ENCODE measurements at regions of chr12 and their contacts with region 1.

Region 1: GRCh38 chr12:12562585-12563261 is at the start of gene DUSP16:
- DNase-seq: peak; percentile 84 to 97
- H3K4me3 ChIP-seq: peak within 1 kb of the TSS; percentile 96 to 97
- H3K27ac ChIP-seq: peak within 1 kb of the TSS; percentile 100
- H3K4me1 ChIP-seq: peaks cover 0 to 15% of the 10 kb centered on the region in 2 donors
- H3K27me3 ChIP-seq: no peaks in the 10 kb centered on the region
- CTCF ChIP-seq: no peak
- total RNA-seq, gene DUSP16: 54.8 TPM

Region 2: GRCh38 chr12:12376646-12377448 is 185.9 kb before region 1 on chr12:
- intact Hi-C with region 1: loop called (anchors 2 kb)
- DNase-seq: no peak
- H3K4me3 ChIP-seq: no peak overlapping the region
- H3K27ac ChIP-seq: no peak overlapping the region
- H3K4me1 ChIP-seq: peaks cover 0 to 4% of the 10 kb centered on the region in 2 donors
- H3K27me3 ChIP-seq: no peaks in the 10 kb centered on the region
- CTCF ChIP-seq: peak; percentile 60 to 72 (median 66)

Region 3: DNA sequence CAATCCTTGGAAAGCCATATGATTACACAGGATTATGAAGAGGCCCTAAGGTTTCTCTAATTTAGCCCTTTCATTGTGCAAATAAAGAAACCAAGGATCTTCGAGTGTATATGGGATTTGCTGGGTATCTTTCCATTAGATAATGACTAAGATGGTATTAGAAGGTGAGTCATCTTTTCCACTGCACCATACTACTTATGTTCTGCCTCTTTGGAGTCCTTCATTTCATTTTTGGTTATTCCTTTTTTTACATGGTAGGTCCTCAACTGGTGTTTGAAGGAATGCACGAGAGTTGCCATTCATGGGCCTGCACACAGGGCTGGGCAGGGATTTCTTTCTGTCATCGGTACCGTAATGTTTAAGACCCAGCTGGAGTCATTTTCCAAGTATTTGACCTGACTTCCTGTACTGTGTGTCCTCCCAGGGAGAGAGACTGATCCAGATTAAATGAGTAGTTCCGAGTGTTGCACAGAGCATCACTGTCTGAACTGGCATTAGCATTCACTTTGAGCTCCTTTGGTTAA is 120.1 kb before region 1 on chr12:
- intact Hi-C with region 1: loop called (anchors 2 kb)
- DNase-seq: peak in 1 of 2 donors; percentile 73
- H3K4me3 ChIP-seq: peak overlapping the region in 1 of 2 donors; percentile 30
- H3K27ac ChIP-seq: peak overlapping the region; percentile 80 to 87
- H3K4me1 ChIP-seq: peaks cover 0 to 36% of the 10 kb centered on the region in 2 donors
- H3K27me3 ChIP-seq: no peaks in the 10 kb centered on the region
- CTCF ChIP-seq: no peak

Region 4: GRCh38 chr12:12611512-12612306 is 49.0 kb after region 1 on chr12 and contains the start of gene CREBL2:
- intact Hi-C with region 1: loop called (anchors 1 kb)
- DNase-seq: peak; percentile 83 to 97
- H3K4me3 ChIP-seq: peak within 1 kb of the TSS; percentile 76 to 83
- H3K27ac ChIP-seq: peak within 1 kb of the TSS; percentile 91 to 94
- H3K4me1 ChIP-seq: peaks cover 3 to 16% of the 10 kb centered on the region in 2 donors
- H3K27me3 ChIP-seq: no peaks in the 10 kb centered on the region
- CTCF ChIP-seq: no peak
- total RNA-seq, gene CREBL2: 19.4 TPM

Region 5: DNA sequence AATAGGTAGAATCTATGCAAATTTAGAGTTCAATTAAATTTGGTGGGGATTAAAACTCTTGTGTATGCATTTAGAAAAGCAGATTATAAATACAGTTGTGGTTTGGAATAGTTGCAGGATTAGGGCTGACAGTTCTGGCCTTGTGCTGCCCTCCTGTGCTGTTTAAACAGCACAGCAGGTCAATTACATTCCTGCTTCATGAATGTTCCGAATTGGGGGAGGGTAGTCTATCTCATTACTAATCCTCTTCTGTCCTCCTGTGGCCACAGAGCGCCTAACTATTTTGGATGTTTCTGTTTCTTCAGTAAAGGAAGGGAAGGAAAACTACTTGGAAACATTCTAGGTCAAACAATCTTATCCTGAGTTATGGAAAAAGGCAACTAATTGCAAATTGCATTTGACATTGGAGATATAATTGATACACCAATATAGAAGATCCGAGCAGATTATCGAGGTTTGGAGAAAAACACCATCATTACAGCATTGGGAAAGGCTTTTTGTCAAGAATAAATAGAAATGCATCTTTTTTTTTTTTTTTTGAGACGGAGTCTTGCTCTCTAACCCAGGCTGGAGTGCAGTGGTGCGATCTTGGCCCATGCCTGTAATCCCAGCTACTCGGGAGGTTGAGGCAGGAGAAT is 142.0 kb after region 1 on chr12:
- intact Hi-C with region 1: loop called (anchors 5 kb)
- DNase-seq: peak in 1 of 2 donors; percentile 80
- H3K4me3 ChIP-seq: no peak overlapping the region
- H3K27ac ChIP-seq: no peak overlapping the region
- H3K4me1 ChIP-seq: peaks cover 0 to 5% of the 10 kb centered on the region in 2 donors
- H3K27me3 ChIP-seq: no peaks in the 10 kb centered on the region
- CTCF ChIP-seq: peak; percentile 88 to 96 (median 90)

Measured in ascending aorta (tissue), 2 donors.